Dorsolateral prefrontal cortex (tissue), 120 donors: ENCODE measurements at regions of chr6 and their contacts with region 1.

Region 1: GRCh38 chr6:151339369-151339768 is 52.0 kb downstream of the ZBTB2 start:
- DNase-seq: no peak
- H3K4me3 ChIP-seq: no peak overlapping the region
- H3K27ac ChIP-seq: peak overlapping the region in 1 of 59 donors; percentile 28
- H3K27me3 ChIP-seq: no peaks in the 10 kb centered on the region
- CTCF ChIP-seq: no peak

Region 2: DNA sequence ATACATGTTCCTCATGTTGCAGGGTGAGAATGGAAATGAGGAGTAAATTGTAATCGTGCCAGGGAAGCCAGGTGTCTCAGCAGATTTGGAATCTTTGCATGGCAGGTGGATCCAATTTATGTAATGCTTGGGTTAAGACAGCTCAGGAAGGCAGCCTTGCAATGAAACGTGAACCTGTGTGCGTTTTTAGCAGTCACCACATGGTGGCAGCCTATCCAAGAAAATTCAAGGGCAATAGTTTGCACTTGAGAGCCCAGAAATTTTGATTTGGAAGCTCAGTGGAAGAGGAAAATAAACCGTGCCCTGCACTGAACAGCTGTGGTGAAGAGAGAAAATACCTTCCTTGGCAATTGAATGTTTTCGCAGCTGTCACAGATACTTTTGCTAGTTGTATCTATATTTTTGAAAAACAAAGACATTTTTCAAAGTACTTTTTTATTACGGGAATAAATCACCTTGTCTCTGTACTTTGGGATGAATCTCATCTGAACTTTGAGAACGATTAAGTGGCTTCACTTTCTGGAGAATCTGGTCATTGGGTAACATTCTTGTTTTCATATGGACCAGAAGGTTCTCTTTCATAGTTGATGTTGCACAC is 447.4 kb before region 1 on chr6:
- intact Hi-C with region 1: loop called in 1 of 2 experiments (anchors 5 kb)
- DNase-seq: peak; percentile 31 to 90 (median 73)
- H3K4me3 ChIP-seq: no peak overlapping the region
- H3K27ac ChIP-seq: peak overlapping the region in 4 of 59 donors; percentile 3 to 86 (median 16)
- H3K27me3 ChIP-seq: no peaks in the 10 kb centered on the region
- CTCF ChIP-seq: peak; percentile 71 to 97 (median 91)

Region 3: GRCh38 chr6:151014404-151015100 is 324.8 kb before region 1 on chr6:
- intact Hi-C with region 1: loop called in 1 of 2 experiments (anchors 5 kb)
- DNase-seq: peak; percentile 41 to 86 (median 70)
- H3K4me3 ChIP-seq: peak overlapping the region in 23 of 59 donors; percentile 2 to 41 (median 27)
- H3K27ac ChIP-seq: peak overlapping the region in 12 of 59 donors; percentile 13 to 53 (median 31)
- H3K27me3 ChIP-seq: no peaks in the 10 kb centered on the region
- CTCF ChIP-seq: peak; percentile 87 to 99 (median 96)

Region 4: DNA sequence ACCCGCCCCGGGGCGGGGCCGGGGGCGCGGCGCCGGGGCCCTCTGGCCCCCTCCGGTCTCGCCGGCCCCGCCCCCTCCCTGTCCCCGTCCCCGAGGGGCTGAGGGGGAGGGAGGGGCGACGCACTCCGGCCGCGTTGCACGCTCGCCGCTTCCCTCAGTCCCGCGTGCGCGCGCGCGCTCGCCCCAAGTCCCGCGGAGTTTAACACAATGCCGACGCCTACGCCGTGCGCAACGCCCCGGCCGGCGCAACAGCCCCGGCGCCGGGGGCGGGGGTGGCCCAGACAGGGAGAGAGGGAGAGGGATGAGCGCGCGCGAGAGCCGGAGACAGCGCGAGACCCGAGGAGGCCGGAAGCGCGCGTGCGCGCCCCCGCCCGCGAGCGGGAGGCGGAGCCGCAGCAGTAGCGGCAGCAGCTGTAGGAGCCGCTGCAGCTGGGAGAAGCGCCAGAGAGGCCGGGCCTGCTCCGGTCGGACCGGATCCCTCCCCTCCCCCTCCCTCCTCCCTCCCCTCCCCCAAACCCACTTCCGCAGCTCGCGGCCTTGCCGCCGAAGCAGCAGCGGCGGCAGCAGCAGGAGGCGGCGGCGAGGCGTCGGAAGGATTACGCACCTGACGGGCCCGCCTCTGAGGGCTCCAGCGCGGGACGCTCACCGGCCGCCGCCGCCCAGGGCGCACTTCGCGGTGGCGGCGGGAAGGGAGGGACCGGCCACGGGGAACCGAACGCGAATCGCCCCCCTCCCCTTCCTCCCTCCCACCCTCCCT is 51.1 kb after region 1 on chr6:
- intact Hi-C with region 1: loop called in 1 of 2 experiments (anchors 5 kb)
- DNase-seq: peak; percentile 88 to 98 (median 96)
- H3K4me3 ChIP-seq: peak overlapping the region; percentile 49 to 99 (median 94)
- H3K27ac ChIP-seq: peak overlapping the region; percentile 93 to 100 (median 99)
- H3K27me3 ChIP-seq: no peaks in the 10 kb centered on the region
- CTCF ChIP-seq: peak in 13 of 56 donors; percentile 2 to 33 (median 16)

Region 5: GRCh38 chr6:151400454-151400853 is 61.1 kb after region 1 on chr6:
- intact Hi-C with region 1: no loop called
- DNase-seq: no peak
- H3K4me3 ChIP-seq: no peak overlapping the region
- H3K27ac ChIP-seq: no peak overlapping the region
- H3K27me3 ChIP-seq: no peaks in the 10 kb centered on the region
- CTCF ChIP-seq: no peak

Region 6: DNA sequence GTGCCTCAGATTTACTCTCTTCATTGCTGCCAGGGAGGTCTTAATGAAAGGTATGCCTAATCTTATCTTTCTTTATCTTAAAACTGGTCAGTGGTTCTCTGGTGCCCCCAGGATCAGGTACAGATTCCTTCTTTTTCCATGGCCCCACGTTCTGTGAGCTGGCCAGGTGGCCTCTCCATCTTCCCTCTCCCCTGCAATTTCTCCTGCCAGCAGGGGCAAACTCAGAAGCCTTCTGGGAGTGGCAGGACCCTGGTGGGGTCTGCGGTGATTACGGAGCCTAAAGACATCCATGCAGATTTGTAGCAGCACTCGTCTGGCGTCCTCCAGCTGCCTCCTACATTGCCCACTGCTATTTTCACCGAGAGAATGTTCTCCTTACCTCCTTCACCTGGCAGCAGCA is 250.3 kb after region 1 on chr6:
- intact Hi-C with region 1: no loop called
- DNase-seq: no peak
- H3K4me3 ChIP-seq: no peak overlapping the region
- H3K27ac ChIP-seq: no peak overlapping the region
- H3K27me3 ChIP-seq: no peaks in the 10 kb centered on the region
- CTCF ChIP-seq: no peak

Region 7: DNA sequence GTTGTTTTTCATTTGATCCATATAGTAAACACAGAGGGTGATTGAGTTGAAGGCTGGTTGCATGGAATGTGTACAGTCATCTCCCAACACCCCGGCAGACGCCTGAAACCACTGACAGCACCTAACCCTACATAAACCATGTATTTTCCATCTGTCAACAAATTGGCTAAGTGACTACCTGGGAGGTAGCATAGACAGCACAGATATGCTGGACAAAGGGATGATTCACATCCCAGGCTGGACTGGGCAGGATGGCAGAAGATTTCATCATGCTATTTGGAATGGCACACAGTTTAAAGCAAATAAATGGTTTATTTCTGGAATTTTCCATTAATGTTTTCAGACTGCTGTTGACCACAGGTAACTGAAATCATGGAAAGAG is 1406.8 kb after region 1 on chr6:
- intact Hi-C with region 1: no loop called
- DNase-seq: no peak
- H3K4me3 ChIP-seq: no peak overlapping the region
- H3K27ac ChIP-seq: no peak overlapping the region
- H3K27me3 ChIP-seq: peaks cover 0 to 8% (median 0%) of the 10 kb centered on the region in 45 donors
- CTCF ChIP-seq: no peak